ENCODE measurements at regions of chr3 and their contacts with region 1.

Region 1: DNA sequence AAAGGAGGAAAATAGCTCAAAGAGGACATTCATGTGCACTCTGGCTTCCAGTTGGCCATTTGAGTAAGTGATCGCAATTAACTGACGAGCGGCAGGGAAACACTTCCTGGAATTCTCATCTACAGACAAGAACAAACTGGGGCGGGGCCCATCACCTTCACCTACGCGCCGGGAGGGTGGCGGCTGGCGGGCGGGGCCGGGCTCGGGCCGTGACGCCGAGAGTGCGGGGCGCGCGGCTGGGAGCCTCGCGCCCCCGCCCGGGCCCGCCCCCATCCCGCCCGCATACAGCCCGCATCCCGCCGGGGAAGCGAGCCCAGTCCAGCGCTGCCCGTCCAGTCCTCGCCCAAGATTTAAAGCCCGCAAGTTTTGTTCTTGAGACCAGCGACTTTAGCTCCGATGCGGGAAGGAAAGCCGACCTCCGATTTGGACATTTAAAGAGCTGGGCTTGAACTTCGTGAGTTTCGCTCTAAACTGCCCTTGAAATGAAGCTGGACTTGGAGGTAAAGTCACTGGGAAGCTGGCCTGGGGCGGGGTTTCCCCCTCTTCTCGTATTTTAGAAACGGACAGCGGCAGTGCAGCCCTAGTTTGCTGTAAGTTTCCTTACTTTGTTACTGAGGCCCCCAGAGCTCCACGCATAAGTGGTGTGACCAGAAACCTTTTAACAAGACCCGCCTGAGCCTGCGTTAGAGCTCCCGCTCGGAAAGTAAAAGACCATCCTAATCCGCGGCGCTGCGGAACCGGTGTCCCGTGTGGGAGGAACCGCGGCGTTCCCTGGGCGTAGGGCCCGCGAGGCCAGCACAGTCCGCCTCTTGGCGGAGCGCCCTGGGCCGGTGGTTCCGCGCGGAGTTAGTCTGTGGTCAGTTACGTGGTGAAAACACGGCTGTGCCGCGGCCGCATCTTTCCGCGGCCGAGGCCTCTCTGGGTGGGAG is at the start of gene B3GNT5:
- DNase-seq: peak; percentile 66 to 72 (median 66)
- H3K4me3 ChIP-seq: peak within 1 kb of the TSS; percentile 68 to 91 (median 69)
- H3K4me3 Mint-ChIP-seq: peak within 1 kb of the TSS; percentile 88 to 92
- H3K27ac ChIP-seq: peak within 1 kb of the TSS; percentile 66 to 88
- H3K27ac Mint-ChIP-seq: peak within 1 kb of the TSS; percentile 86 to 97 (median 95)
- H3K4me1 ChIP-seq: peaks cover 17 to 27% of the 10 kb centered on the region in 2 donors
- H3K4me1 Mint-ChIP-seq: peaks cover 41% of the 10 kb centered on the region
- H3K27me3 ChIP-seq: no peaks in the 10 kb centered on the region
- H3K27me3 Mint-ChIP-seq: peaks cover 2 to 3% (median 3%) of the 10 kb centered on the region in 3 donors
- CTCF ChIP-seq: no peak
- polyA plus RNA-seq, gene B3GNT5: 14.1 to 17.7 (median 14.2) TPM

Region 2: GRCh38 chr3:183210839-183211341 is 42.3 kb before region 1 on chr3:
- intact Hi-C with region 1: loop called (anchors 2 to 5 kb)
- DNase-seq: peak; percentile 84 to 93 (median 92)
- H3K4me3 ChIP-seq: peak overlapping the region in 2 of 3 experiments; percentile 12 to 55
- H3K4me3 Mint-ChIP-seq: peak overlapping the region; percentile 32 to 68
- H3K27ac ChIP-seq: peak overlapping the region; percentile 81 to 89
- H3K27ac Mint-ChIP-seq: peak overlapping the region; percentile 95 to 99 (median 96)
- H3K4me1 ChIP-seq: peaks cover 39 to 47% of the 10 kb centered on the region in 2 donors
- H3K4me1 Mint-ChIP-seq: peaks cover 54% of the 10 kb centered on the region
- H3K27me3 ChIP-seq: no peaks in the 10 kb centered on the region
- H3K27me3 Mint-ChIP-seq: peaks cover 0 to 5% (median 0%) of the 10 kb centered on the region in 3 donors
- CTCF ChIP-seq: no peak

Region 3: DNA sequence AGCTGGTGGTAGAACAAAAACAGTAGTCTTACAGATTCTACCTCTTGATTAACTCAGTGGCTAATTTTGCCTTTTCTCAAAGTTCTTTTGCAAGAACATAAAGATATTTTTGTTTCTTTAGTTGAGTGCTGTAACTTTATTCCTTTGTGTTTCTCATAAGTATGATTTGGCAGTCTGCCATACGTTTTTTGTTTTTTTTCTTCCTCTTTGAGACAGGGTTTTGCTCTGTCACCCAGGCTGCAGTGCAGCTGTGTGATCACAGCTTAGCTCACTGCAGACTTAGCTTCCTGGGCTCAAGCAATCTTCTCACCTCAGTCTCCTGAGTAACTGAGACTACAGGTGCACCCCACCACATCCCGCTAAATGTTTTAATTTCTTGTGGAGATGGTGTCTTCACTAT is 22.2 kb after region 1 on chr3:
- intact Hi-C with region 1: no loop called
- DNase-seq: peak; percentile 85 to 92 (median 87)
- H3K4me3 ChIP-seq: peak overlapping the region in 1 of 3 experiments; percentile 30
- H3K4me3 Mint-ChIP-seq: peak overlapping the region in 1 of 2 donors; percentile 28
- H3K27ac ChIP-seq: peak overlapping the region in 1 of 2 donors; percentile 70
- H3K27ac Mint-ChIP-seq: peak overlapping the region; percentile 79 to 92 (median 86)
- H3K4me1 ChIP-seq: peaks cover 31 to 42% of the 10 kb centered on the region in 2 donors
- H3K4me1 Mint-ChIP-seq: peaks cover 27% of the 10 kb centered on the region
- H3K27me3 ChIP-seq: no peaks in the 10 kb centered on the region
- H3K27me3 Mint-ChIP-seq: no peaks in the 10 kb centered on the region
- CTCF ChIP-seq: no peak

Region 4: DNA sequence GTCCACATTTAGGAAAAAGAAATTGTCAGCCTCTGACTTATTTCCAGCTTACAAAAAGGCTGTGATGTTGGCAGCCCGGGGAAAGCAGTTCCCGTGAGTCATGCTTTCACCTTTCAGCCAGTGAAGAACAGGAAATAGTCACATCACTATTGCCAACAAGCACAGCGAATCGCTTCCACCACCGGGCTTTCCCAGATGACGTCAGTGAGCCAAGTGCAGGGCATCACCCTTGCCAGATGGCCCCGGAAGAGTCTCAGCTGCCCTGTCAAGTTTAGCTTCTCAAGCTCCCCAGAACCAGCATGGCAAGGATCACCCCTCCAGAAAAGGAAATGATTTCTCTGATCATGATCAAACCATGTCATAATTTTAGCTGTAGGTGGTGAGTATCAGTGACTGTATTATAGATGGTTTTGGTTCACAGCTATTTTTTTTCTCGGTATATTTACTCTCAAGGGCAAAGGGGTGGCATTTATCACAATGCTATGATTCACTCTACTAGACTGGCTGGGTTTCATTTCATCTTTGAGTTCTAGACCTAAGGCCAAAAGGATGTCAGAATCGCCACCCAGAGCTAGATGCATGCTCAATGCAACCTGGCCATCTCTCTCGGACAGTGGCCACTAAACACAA is 32.7 kb after region 1 on chr3:
- intact Hi-C with region 1: loop called in 1 of 2 experiments (anchors 5 kb)
- DNase-seq: peak; percentile 97 to 100 (median 99)
- H3K4me3 ChIP-seq: peak overlapping the region in 1 of 3 experiments; percentile 30
- H3K4me3 Mint-ChIP-seq: peak overlapping the region; percentile 48 to 56
- H3K27ac ChIP-seq: peak overlapping the region; percentile 44 to 85
- H3K27ac Mint-ChIP-seq: peak overlapping the region; percentile 87 to 96 (median 93)
- H3K4me1 ChIP-seq: peaks cover 24 to 29% of the 10 kb centered on the region in 2 donors
- H3K4me1 Mint-ChIP-seq: peaks cover 34% of the 10 kb centered on the region
- H3K27me3 ChIP-seq: no peaks in the 10 kb centered on the region
- H3K27me3 Mint-ChIP-seq: peaks cover 0 to 2% (median 1%) of the 10 kb centered on the region in 3 donors
- CTCF ChIP-seq: no peak

Region 5: DNA sequence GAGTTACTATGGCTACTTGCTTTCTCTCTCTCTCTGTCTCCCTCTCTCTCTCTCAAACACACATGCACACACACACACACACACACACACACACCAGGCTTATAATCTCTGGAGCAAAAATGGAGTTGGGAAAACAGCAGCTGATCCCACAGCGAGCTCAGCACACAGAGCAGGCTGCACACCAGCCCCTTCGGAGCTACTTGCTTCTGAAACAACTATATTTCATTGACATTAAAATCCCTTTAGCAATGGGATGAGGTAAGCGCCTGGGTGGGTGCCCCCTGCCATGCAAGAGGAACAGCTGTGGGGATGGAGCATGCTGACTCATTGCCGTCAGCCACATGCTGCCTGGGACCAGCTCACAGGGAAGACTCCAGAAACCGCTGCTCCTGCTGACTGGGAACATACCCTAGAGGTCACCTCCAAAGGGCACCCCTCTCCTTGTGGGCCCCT is 45.5 kb after region 1 on chr3:
- intact Hi-C with region 1: loop called (anchors 5 to 10 kb)
- DNase-seq: peak; percentile 76 to 93 (median 86)
- H3K4me3 ChIP-seq: peak overlapping the region in 1 of 3 experiments; percentile 21
- H3K4me3 Mint-ChIP-seq: peak overlapping the region; percentile 61 to 71
- H3K27ac ChIP-seq: peak overlapping the region in 1 of 2 donors; percentile 37
- H3K27ac Mint-ChIP-seq: peak overlapping the region; percentile 77 to 94 (median 92)
- H3K4me1 ChIP-seq: peaks cover 46 to 49% of the 10 kb centered on the region in 2 donors
- H3K4me1 Mint-ChIP-seq: peaks cover 60% of the 10 kb centered on the region
- H3K27me3 ChIP-seq: no peaks in the 10 kb centered on the region
- H3K27me3 Mint-ChIP-seq: peaks cover 0 to 3% (median 3%) of the 10 kb centered on the region in 3 donors
- CTCF ChIP-seq: no peak

Region 6: DNA sequence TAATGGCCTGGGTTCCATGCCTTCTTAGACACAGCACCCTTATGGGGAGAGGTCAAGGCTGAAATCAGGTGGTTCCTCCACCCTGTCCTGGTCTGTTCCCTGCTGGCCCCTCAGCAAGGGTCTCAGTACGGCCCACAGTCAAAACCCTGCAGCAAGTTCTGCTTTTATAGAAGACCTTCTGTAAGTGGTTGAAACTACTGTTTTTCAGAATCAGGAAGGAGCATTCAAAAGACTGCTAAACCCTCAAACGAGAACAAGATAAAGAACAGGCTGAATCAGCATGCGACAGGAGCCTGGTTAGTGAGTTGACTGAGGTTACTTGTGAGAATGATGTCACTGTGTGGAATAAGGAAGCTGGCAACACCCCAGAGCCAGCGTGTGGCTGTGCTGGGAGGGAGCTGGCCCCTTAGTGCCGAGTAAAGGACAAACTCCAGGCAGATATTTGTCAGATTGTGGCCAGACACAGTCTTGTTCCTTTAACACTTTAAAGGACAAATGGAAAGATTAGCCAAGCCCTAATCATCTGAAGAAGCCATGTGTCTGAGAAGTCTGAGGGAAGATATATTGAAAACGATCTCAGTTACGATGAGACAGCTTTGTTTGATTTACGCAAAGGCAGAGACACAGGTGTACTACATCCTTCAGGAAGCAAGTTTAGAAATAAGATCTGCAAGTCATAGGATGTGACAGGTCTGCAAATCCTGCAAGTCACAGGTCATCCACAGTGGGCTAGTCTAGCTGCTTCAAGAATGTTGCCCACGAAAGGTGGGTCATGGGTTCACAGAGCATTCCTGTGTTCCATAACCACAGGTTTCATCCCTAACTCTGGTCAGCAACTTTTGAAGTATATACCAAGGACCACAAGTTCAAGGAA is 53.8 kb after region 1 on chr3:
- intact Hi-C with region 1: loop called in 1 of 2 experiments (anchors 10 kb)
- DNase-seq: peak; percentile 95 to 98 (median 98)
- H3K4me3 ChIP-seq: peak overlapping the region in 2 of 3 experiments; percentile 6 to 60
- H3K4me3 Mint-ChIP-seq: peak overlapping the region; percentile 47 to 78
- H3K27ac ChIP-seq: peak overlapping the region; percentile 75 to 93
- H3K27ac Mint-ChIP-seq: peak overlapping the region; percentile 91 to 97 (median 95)
- H3K4me1 ChIP-seq: peaks cover 45 to 54% of the 10 kb centered on the region in 2 donors
- H3K4me1 Mint-ChIP-seq: peaks cover 51% of the 10 kb centered on the region
- H3K27me3 ChIP-seq: no peaks in the 10 kb centered on the region
- H3K27me3 Mint-ChIP-seq: peaks cover 2 to 9% (median 3%) of the 10 kb centered on the region in 3 donors
- CTCF ChIP-seq: no peak

Region 7: DNA sequence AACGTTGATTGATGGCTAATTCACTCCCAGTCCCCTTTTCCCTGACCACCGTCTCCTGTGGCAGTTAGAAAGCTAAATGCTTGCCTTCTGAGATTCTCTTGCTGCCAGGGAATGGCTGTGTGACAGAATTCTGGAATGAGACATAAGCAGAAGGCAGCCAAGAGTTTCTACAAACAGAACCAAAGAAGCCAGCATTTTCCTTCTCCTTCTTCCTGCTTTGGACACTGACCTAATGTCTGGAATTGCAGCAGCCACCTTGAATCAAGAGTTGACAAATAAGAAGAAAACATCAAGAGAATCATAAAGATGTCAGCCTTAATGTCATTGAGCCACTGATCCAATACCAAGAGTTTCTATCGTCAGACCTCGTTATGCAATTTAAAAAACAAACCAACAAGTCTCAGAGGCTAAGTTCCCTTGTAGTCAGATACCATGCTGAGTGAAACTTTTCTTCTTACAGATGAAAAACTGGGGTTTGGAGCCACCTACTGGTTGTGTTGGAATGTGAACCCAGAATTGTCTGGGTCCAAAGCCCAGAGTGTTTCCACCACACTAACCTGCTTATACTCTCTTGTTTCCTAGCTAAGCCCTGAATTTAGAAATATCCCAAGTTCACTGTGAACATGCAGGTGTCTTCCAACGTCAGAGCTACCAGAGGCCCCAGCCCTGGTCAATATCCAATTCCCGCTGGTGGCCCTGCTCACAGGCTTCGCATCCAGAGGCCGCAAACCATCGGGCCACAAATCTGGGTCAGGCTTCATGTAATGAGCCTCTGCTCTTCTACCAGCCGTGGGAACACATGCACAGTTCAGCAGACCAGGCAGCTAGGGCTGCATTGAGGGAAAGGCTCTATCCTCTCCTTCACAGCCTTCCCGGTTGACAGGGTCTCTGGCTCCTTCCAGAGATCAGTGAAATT is 132.7 kb after region 1 on chr3:
- intact Hi-C with region 1: loop called (anchors 5 to 10 kb)
- DNase-seq: peak; percentile 68 to 81 (median 80)
- H3K4me3 ChIP-seq: no peak overlapping the region
- H3K4me3 Mint-ChIP-seq: no peak overlapping the region
- H3K27ac ChIP-seq: no peak overlapping the region
- H3K27ac Mint-ChIP-seq: peak overlapping the region in 2 of 7 donors; percentile 16 to 30
- H3K4me1 ChIP-seq: peaks cover 16 to 19% of the 10 kb centered on the region in 2 donors
- H3K4me1 Mint-ChIP-seq: peaks cover 19% of the 10 kb centered on the region
- H3K27me3 ChIP-seq: no peaks in the 10 kb centered on the region
- H3K27me3 Mint-ChIP-seq: peaks cover 0 to 2% (median 0%) of the 10 kb centered on the region in 3 donors
- CTCF ChIP-seq: peak; percentile 78

Measured in CD14-positive monocyte (primary cell).